A549 (cell line): ENCODE measurements at regions of chr16 and their contacts with region 1.

Region 1: DNA sequence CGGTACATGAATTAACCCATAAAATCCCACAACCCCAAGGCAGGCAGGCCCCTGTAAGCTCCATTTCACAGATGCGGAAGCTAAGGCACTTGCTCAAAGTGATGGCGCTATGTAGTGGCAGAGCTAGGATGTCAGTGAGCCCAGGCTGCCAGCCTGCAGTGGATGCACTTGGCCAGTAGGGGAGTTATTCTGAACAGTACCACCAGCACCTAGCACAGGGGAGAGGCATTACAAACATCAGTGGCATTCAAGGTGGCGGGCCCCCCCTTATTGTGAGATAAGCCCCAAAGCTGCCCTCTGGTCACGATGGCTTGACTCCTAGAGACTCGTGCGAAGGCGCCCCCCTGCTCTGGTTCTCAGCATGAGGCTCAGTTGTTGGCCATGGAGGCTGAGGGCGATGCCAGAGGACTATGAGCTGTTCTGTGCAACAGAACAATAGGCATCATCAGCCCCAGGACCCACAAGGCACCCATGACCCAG is 33.8 kb downstream of the GTF3C1 start:
- DNase-seq: peak; percentile 48 to 69
- ATAC-seq: peak; percentile 91 to 96
- H3K4me3 ChIP-seq: no peak overlapping the region
- H3K27ac ChIP-seq: no peak overlapping the region
- H3K4me1 ChIP-seq: no peaks in the 10 kb centered on the region
- CTCF ChIP-seq: peak; percentile 35
- EP300 ChIP-seq: no peak
- POLR2A ChIP-seq: no peak
- RAD21 ChIP-seq: peak in 1 of 2 experiments; percentile 7; a peak in 1 of 5 replicates

Region 2: GRCh38 chr16:27374804-27375425 is 141.0 kb before region 1 on chr16:
- CTCF ChIA-PET with region 1: no interaction called
- POLR2A ChIA-PET with region 1: no interaction called
- DNase-seq: peak; percentile 81 to 87
- ATAC-seq: peak; percentile 90 to 98
- H3K4me3 ChIP-seq: no peak overlapping the region
- H3K27ac ChIP-seq: no peak overlapping the region; a peak in 1 of 6 replicates
- H3K4me1 ChIP-seq: no peaks in the 10 kb centered on the region
- CTCF ChIP-seq: peak; percentile 16; the same call in 1 of the 3 replicates
- EP300 ChIP-seq: no peak
- POLR2A ChIP-seq: no peak
- RAD21 ChIP-seq: peak; percentile 16 to 37; a peak in 2 of 5 replicates

Region 3: GRCh38 chr16:27499659-27500055 is 16.3 kb before region 1 on chr16:
- CTCF ChIA-PET with region 1: interaction called, 18 read pairs
- POLR2A ChIA-PET with region 1: interaction called, 3 read pairs
- DNase-seq: no peak
- ATAC-seq: no peak
- H3K4me3 ChIP-seq: no peak overlapping the region
- H3K27ac ChIP-seq: no peak overlapping the region
- H3K4me1 ChIP-seq: no peaks in the 10 kb centered on the region
- CTCF ChIP-seq: no peak
- EP300 ChIP-seq: no peak
- POLR2A ChIP-seq: no peak
- RAD21 ChIP-seq: no peak

Region 4: GRCh38 chr16:27526180-27526579 is 10.3 kb after region 1 on chr16:
- CTCF ChIA-PET with region 1: interaction called, 22 read pairs
- POLR2A ChIA-PET with region 1: no interaction called
- DNase-seq: peak in 1 of 2 experiments; percentile 13
- ATAC-seq: no peak
- H3K4me3 ChIP-seq: no peak overlapping the region
- H3K27ac ChIP-seq: no peak overlapping the region
- H3K4me1 ChIP-seq: no peaks in the 10 kb centered on the region
- CTCF ChIP-seq: no peak
- EP300 ChIP-seq: no peak
- POLR2A ChIP-seq: no peak
- RAD21 ChIP-seq: no peak

Region 5: GRCh38 chr16:27531186-27531585 is 15.3 kb after region 1 on chr16:
- CTCF ChIA-PET with region 1: interaction called, 22 read pairs
- POLR2A ChIA-PET with region 1: no interaction called
- DNase-seq: no peak
- ATAC-seq: no peak; a peak in 1 of 6 replicates
- H3K4me3 ChIP-seq: no peak overlapping the region
- H3K27ac ChIP-seq: no peak overlapping the region
- H3K4me1 ChIP-seq: no peaks in the 10 kb centered on the region
- CTCF ChIP-seq: no peak
- EP300 ChIP-seq: no peak
- POLR2A ChIP-seq: no peak
- RAD21 ChIP-seq: no peak

Region 6: GRCh38 chr16:27566417-27566816 is 50.5 kb after region 1 on chr16:
- CTCF ChIA-PET with region 1: no interaction called
- POLR2A ChIA-PET with region 1: no interaction called
- DNase-seq: no peak
- ATAC-seq: no peak
- H3K4me3 ChIP-seq: no peak overlapping the region
- H3K27ac ChIP-seq: peak overlapping the region in 1 of 2 experiments; percentile 52; a peak in 2 of 6 replicates
- H3K4me1 ChIP-seq: peaks cover 20% of the 10 kb centered on the region
- CTCF ChIP-seq: no peak
- EP300 ChIP-seq: no peak
- POLR2A ChIP-seq: no peak
- RAD21 ChIP-seq: no peak

Region 7: GRCh38 chr16:27665881-27666280 is 150.0 kb after region 1 on chr16:
- CTCF ChIA-PET with region 1: no interaction called
- POLR2A ChIA-PET with region 1: no interaction called
- DNase-seq: no peak
- ATAC-seq: no peak
- H3K4me3 ChIP-seq: no peak overlapping the region
- H3K27ac ChIP-seq: no peak overlapping the region
- H3K4me1 ChIP-seq: no peaks in the 10 kb centered on the region
- CTCF ChIP-seq: no peak
- EP300 ChIP-seq: no peak
- POLR2A ChIP-seq: no peak
- RAD21 ChIP-seq: no peak